Panc1 (cell line): ENCODE measurements at regions of chr15 and their contacts with region 1.

Region 1: DNA sequence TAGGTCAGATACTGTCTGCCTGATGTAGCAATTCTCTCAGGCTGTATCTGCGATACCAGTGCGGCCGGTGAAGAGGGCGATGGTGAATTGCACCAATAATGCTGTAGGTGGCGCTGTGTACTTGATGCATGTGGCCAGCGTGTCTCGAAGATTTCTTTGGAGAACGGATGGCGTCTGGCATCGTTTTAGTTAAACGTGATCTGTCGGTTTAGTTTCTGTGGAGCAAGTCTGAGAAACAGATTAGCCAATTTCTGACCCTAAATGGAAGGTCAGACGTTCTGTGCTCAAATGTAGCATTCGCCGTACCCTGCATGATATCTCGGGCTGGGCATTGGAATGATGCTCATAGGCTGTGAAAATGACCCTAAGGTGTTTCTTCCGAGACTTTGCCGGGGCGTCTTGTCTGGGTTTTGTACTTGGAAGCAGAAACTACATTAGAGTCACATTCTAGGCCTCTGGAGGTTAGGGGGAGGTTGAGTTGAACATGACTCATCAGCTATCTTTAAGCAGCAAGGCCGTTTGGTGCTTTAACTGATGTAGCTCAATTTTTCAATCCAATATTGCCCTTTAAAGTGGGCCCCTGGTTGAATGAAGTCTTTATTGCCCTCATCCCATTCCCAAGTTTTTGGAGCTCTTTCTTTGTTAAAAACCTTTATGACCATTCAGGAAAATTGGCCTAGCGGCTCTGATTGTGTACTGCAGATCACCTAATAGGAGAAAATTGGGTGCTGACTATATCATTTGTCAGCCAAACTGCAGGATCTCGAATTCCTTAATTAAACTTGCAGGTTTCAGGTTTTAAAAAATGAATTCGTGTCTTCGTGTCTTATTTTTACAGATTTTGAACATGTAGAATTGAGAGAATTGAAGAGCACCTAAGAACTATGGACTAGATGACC is 80.0 kb downstream of the SQOR start:
- DNase-seq: no peak
- ATAC-seq: peak; percentile 93
- H3K4me3 ChIP-seq: no peak overlapping the region
- H3K27ac ChIP-seq: no peak overlapping the region
- H3K4me1 ChIP-seq: no peaks in the 10 kb centered on the region
- H3K27me3 ChIP-seq: no peaks in the 10 kb centered on the region
- CTCF ChIP-seq: peak; percentile 95

Region 2: GRCh38 chr15:45790325-45790943 is 75.6 kb after region 1 on chr15:
- CTCF ChIA-PET with region 1: no interaction called
- POLR2A ChIA-PET with region 1: no interaction called
- in situ Hi-C with region 1: no loop called
- intact Hi-C with region 1: loop called (anchors 2 kb)
- DNase-seq: peak; percentile 17
- ATAC-seq: peak; percentile 92
- H3K4me3 ChIP-seq: no peak overlapping the region
- H3K27ac ChIP-seq: no peak overlapping the region
- H3K4me1 ChIP-seq: no peaks in the 10 kb centered on the region
- H3K27me3 ChIP-seq: no peaks in the 10 kb centered on the region
- CTCF ChIP-seq: peak; percentile 74

Region 3: DNA sequence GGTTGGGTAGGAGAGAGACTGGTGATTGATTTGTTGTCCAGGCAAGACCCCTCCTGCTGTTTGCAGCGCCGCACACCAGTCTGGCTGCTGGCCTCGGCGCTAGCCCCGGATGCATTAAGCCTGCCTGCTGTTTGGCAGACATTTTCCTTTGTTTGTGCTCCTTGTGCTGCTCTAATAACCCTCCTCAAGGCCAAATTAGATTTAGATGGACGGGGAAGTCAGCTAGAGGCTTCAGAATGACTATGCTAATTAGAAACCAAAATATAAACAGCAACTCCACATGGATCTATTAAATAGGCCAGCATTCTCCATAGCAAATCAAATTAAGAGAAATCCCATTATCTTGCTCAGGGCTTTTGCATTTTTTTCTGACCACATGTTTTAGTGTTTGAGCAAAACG is 365.2 kb after region 1 on chr15:
- CTCF ChIA-PET with region 1: no interaction called
- POLR2A ChIA-PET with region 1: no interaction called
- in situ Hi-C with region 1: no loop called
- intact Hi-C with region 1: no loop called
- DNase-seq: no peak
- ATAC-seq: no peak
- H3K4me3 ChIP-seq: no peak overlapping the region
- H3K27ac ChIP-seq: no peak overlapping the region
- H3K4me1 ChIP-seq: no peaks in the 10 kb centered on the region
- H3K27me3 ChIP-seq: no peaks in the 10 kb centered on the region
- CTCF ChIP-seq: no peak

Region 4: GRCh38 chr15:46331546-46331945 is 616.7 kb after region 1 on chr15:
- CTCF ChIA-PET with region 1: no interaction called
- POLR2A ChIA-PET with region 1: no interaction called
- in situ Hi-C with region 1: no loop called
- intact Hi-C with region 1: no loop called
- DNase-seq: no peak
- ATAC-seq: no peak
- H3K4me3 ChIP-seq: no peak overlapping the region
- H3K27ac ChIP-seq: no peak overlapping the region
- H3K4me1 ChIP-seq: no peaks in the 10 kb centered on the region
- H3K27me3 ChIP-seq: no peaks in the 10 kb centered on the region
- CTCF ChIP-seq: no peak